Right ventricle myocardium inferior (tissue), 1 donor: ENCODE measurements at regions of chrX and their contacts with region 1.

Region 1: DNA sequence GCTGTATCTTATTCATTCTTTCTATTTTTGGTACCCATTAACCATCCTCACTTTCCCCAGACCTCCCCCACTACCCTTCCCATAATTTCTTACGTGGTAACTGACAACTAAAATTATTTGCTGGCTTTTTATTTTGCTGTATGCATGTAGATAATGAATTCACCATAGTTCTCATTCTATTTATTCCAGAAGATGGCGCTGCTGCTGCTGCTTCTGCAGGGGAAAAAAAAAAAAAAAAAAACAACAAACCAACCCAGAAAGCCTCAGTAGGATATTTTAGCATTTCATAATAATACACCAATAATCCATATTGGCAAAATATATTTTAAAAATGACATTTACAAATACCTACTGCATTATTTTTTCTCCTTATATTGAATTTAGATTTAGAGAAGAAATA is 416.6 kb upstream of the MAGEB18 start:
- DNase-seq: no peak
- ATAC-seq: no peak

Region 2: DNA sequence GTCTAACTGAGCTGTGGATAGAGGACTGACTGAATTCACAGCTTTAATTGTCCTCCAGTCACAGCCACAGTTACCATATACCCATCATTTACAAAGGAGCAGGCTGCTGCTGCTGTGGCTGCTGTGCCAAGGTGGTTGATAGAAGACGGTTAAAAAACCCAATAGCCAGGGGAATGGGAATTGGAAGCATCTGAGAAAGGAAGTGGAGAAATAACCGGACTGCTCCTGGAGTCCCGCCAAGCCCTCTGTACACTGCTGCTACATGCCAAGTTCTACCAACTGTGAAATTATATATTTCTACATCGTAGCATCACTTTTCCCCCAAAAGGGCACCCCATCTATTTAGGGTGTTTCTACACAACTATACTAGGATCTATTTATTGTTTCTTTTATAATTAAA is 426.1 kb before region 1 on chrX:
- intact Hi-C with region 1: no loop called
- DNase-seq: no peak
- ATAC-seq: no peak

Region 3: DNA sequence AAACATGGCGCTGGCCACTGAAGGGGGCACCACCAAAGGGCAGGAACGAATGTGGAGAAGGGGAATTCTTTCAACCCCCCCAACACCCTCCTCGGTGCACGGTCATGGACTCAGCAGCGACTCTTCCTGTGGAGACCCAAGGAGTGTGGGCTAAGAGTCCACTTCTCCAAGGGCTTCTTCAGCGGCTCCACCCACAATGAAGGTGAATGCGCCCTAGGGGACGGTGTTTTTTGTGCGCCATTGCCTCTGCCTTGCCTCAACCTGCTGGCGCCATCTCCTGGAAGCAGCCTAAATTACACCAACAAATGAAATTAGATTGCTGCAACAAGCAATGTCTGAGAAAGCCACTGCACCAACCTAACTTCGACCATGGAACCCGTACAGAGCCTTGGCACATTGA is 247.4 kb after region 1 on chrX:
- intact Hi-C with region 1: loop called (anchors 5 kb)
- DNase-seq: no peak
- ATAC-seq: no peak

Region 4: DNA sequence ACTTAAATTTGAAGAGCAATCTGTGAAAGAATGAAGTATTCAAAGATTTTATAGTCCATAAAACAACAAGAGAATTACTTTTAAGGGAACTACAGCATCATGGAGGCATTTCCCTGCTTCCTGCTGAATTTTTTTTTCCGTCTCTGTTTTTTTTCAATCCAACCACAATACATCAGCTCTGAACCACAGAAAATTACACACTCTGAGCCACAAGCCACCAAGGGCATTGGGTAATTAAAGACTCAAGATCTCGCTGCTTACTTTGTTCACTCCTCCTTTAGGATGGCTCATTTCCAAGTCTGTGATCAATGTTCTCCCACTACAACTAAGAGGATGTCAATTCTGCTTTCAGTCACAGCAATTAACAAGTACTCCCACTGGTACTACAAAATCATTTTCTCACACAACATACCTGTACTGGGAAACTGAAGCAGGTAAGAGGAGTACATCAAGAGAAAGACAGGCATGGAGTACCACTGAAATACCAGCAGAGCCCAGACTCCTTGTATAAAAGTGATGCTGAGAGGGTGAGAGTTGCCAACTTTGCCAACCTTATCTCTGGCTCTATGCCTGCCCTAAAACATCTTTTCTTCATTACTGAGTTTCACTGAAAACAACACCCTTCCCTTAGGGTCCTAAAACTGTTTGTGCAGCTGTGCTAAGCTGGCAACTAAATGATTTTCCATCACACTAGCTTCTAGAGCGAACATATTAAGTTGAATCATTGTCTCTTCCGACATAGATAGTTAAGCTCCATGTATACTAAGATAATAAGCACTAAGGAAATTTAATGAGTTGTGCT is 310.7 kb after region 1 on chrX:
- intact Hi-C with region 1: no loop called
- DNase-seq: no peak
- ATAC-seq: no peak

Region 5: GRCh38 chrX:26070882-26071281 is 349.3 kb after region 1 on chrX:
- intact Hi-C with region 1: no loop called
- DNase-seq: no peak
- ATAC-seq: no peak